ENCODE measurements at regions of chr2 and their contacts with region 1.

Region 1: DNA sequence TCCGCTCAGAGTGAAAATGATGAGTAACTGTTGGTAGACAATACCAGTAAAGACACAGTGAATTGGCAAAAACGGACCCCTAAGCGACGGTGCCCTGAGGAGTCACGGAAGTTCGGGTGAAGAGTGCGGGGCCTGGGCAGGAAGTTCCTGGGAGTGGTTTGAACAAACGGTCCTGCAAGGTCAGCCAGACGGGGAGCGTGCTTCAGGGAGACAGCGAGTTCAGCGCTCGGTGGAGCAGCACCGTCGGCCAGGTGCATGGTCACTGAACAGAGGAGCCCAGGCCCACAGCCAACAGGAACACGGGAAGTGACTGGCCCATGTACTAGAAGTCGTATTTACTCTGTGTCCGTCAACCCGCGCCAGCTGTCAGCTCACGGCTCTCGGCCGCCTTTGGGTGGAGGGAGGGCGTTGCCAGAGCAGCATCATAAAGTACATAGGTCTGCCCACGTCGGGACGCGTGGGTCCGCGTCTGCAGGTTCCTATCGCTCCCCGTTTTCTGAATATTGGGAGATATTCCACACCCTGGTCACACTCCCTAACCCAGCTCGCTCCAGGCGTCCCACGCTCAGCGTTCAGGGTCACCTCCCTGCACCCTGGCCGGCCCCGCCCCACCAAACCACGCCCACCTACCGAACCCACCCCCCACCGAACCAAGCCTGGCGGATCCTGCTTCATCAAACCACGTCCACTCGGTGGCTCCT is 75.6 kb upstream of the UXS1 start:
- DNase-seq: no peak
- H3K4me3 ChIP-seq: peak overlapping the region; percentile 11 to 13
- H3K27ac ChIP-seq: no peak overlapping the region
- H3K4me1 ChIP-seq: no peaks in the 10 kb centered on the region
- H3K27me3 ChIP-seq: no peaks in the 10 kb centered on the region
- CTCF ChIP-seq: no peak
- POLR2A ChIP-seq: no peak

Region 2: GRCh38 chr2:105919826-105920225 is 349.9 kb before region 1 on chr2:
- intact Hi-C with region 1: loop called (anchors 5 kb)
- DNase-seq: no peak
- H3K4me3 ChIP-seq: no peak overlapping the region
- H3K27ac ChIP-seq: no peak overlapping the region
- H3K4me1 ChIP-seq: no peaks in the 10 kb centered on the region
- H3K27me3 ChIP-seq: no peaks in the 10 kb centered on the region
- CTCF ChIP-seq: no peak
- POLR2A ChIP-seq: no peak

Measured in uterus (tissue), 4 donors.